ENCODE measurements at regions of chr3 and their contacts with region 1.

Region 1: DNA sequence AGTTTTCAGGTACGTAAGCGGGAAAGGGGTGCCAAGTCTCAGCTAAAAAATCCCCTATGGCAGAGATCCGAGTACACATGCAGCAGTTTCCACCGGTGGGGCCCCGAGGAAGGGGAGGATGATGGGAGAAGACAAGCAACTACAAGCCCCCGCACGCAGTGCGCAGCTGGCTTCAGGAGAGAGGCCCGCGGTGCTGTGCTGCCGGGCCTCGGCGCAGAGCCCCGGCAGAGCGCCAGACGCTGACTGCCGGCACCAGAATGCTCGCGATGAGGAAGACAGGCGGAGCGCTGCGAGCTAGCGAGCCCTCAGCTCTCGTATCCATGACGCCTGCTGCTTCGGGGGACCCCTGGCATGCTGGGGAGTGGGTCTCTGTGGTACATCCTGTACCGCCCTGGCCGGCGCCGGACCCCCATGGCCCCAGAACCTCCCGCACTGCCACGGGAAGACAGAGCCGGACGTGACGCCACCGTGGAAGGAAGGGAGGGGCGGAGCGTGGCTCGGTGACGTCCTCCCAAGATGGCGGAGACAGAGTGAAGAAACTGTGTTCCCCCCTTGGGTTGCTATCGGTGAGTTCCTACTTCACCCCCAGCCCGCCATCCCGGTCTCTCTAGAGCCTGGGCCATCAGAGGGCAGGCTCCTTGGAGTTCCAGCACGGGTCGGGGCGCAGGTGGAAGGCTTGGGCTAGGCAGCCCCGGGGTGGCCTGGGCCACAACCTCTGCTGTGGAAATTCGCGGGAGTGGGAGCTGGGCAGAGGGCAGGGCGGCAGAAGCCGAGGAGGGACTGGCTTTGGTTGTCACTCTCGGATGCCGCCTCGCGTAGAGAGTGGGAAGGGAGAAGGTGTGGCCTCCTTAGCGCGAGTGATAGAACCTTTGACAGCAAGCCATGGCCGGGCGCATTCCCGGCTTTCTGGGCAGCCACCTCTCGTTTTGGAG is at the start of gene MYNN:
- DNase-seq: peak; percentile 92 to 94
- ATAC-seq: peak; percentile 94 to 97 (median 96)
- H3K4me3 ChIP-seq: peak within 1 kb of the TSS; percentile 67 to 94 (median 87)
- H3K27ac ChIP-seq: peak within 1 kb of the TSS; percentile 95 to 100 (median 98)
- H3K4me1 ChIP-seq: peaks cover 5 to 37% (median 28%) of the 10 kb centered on the region in 9 donors
- H3K27me3 ChIP-seq: no peaks in the 10 kb centered on the region
- CTCF ChIP-seq: peak in 3 of 9 donors; percentile 8 to 32 (median 20)
- total RNA-seq, gene MYNN: 10.1 to 13.6 (median 12.0) TPM

Region 2: GRCh38 chr3:168047190-168047795 is 1725.9 kb before region 1 on chr3:
- intact Hi-C with region 1: loop called in 1 of 10 experiments (anchors 10 kb)
- DNase-seq: no peak
- ATAC-seq: peak; percentile 52 to 67 (median 63)
- H3K4me3 ChIP-seq: no peak overlapping the region
- H3K27ac ChIP-seq: no peak overlapping the region
- H3K4me1 ChIP-seq: peaks cover 0 to 71% (median 47%) of the 10 kb centered on the region in 9 donors
- H3K27me3 ChIP-seq: no peaks in the 10 kb centered on the region
- CTCF ChIP-seq: peak; percentile 72 to 97 (median 83)

Region 3: GRCh38 chr3:169980055-169980454 is 206.9 kb after region 1 on chr3:
- intact Hi-C with region 1: loop called in 1 of 10 experiments (anchors 10 kb)
- DNase-seq: no peak
- ATAC-seq: no peak
- H3K4me3 ChIP-seq: no peak overlapping the region
- H3K27ac ChIP-seq: peak overlapping the region in 1 of 10 donors; percentile 52
- H3K4me1 ChIP-seq: peaks cover 0 to 9% (median 0%) of the 10 kb centered on the region in 9 donors
- H3K27me3 ChIP-seq: no peaks in the 10 kb centered on the region
- CTCF ChIP-seq: no peak

Region 4: DNA sequence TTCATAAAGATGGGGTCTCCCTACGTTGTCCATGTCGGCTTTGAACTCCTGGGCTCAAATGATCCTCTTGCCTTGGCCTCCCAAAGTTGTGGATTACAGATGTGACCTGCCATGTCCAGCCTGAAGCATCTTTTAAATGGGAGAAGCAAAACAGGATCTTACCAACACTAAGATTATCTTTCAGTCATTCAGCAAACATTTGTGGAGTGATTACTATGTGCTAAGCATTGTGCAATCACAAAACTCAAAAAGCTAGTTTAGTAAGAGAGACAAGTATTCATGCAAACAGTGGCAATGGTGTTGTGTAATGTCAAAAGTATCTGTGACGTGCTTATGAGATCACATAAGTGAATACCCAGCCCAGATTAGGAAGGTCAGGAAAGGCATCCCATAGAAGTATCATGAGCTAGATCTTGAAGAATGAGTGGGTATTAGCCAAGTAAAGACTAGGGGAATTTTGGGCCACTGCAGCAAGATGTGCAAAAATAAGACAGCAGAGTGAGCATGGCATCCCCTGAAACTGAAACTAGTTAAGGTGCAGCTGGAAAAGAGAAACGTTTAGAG is 225.5 kb after region 1 on chr3:
- intact Hi-C with region 1: loop called in 1 of 10 experiments (anchors 10 kb)
- DNase-seq: no peak
- ATAC-seq: peak in 1 of 8 donors; percentile 29
- H3K4me3 ChIP-seq: no peak overlapping the region
- H3K27ac ChIP-seq: no peak overlapping the region
- H3K4me1 ChIP-seq: peaks cover 0 to 36% (median 16%) of the 10 kb centered on the region in 9 donors
- H3K27me3 ChIP-seq: no peaks in the 10 kb centered on the region
- CTCF ChIP-seq: no peak